Activated naive CD8-positive, alpha-beta T cell treated with anti-CD3 and anti-CD28 coated beads, Interleukin-2, amount 10 ng/mL, durations not matched to agents 7 days and 5 days (primary cell): ENCODE measurements at regions of chr12 and their contacts with region 1.

Region 1: GRCh38 chr12:118061011-118061875 is at the start of gene WSB2:
- DNase-seq: peak; percentile 73
- ATAC-seq: peak; percentile 23
- H3K4me3 Mint-ChIP-seq: peak within 1 kb of the TSS; percentile 97
- H3K27ac Mint-ChIP-seq: peak within 1 kb of the TSS; percentile 95
- H3K4me1 Mint-ChIP-seq: peaks cover 46% of the 10 kb centered on the region
- H3K27me3 Mint-ChIP-seq: no peaks in the 10 kb centered on the region
- total RNA-seq, gene WSB2: 48.2 to 50.6 TPM

Region 2: DNA sequence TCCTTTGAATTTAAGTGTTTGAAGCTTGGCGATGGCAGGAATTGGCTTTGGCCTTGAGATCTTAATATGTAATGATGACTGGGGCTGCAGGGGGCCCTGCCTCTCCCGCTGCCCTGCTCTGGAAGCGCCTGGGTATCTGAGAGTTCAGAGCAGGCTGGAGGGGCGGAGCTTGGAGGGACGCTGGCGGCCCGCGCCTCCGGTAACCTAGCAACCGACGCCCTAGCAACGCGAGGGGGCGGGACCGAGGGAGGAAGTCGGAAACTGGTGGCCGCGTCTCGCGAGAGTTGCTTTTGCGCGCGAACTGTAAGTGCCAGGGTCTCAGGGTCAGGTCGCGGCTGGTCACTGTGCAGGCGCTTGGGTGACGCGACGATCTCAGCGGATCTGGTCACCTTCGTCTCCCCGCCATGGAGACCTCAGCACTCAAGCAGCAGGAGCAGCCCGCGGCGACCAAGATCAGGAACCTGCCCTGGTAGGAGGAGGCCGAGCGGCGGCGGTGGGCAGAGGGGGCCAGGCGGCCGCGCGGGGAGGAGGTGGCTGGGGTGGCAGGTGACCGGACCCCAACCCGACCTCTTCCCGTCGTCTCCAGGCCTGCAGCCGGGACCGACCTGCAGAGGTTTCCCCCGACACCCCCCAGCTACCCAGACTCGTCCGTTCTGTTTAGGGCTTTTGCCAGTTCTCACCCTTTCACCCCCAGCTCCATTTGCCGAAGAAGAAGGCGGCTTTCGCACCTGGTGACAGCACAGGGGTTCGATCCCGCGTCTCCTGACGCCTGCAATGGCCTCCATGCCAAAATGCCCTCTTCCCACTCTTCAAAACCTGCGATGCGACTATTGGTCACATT is 44.6 kb before region 1 on chr12 and contains the start of gene RFC5:
- POLR2A ChIA-PET with region 1: interaction called, 13 read pairs
- DNase-seq: peak; percentile 99
- ATAC-seq: peak; percentile 89
- H3K4me3 Mint-ChIP-seq: peak within 1 kb of the TSS; percentile 93
- H3K27ac Mint-ChIP-seq: peak within 1 kb of the TSS; percentile 89
- H3K4me1 Mint-ChIP-seq: peaks cover 23% of the 10 kb centered on the region
- H3K27me3 Mint-ChIP-seq: peaks cover 6% of the 10 kb centered on the region
- total RNA-seq, gene RFC5: 42.7 to 44.9 TPM

Region 3: GRCh38 chr12:118073768-118074167 is 12.5 kb after region 1 on chr12:
- POLR2A ChIA-PET with region 1: interaction called, 10 read pairs
- DNase-seq: no peak
- ATAC-seq: no peak
- H3K4me3 Mint-ChIP-seq: no peak overlapping the region
- H3K27ac Mint-ChIP-seq: no peak overlapping the region
- H3K4me1 Mint-ChIP-seq: no peaks in the 10 kb centered on the region
- H3K27me3 Mint-ChIP-seq: no peaks in the 10 kb centered on the region

Region 4: DNA sequence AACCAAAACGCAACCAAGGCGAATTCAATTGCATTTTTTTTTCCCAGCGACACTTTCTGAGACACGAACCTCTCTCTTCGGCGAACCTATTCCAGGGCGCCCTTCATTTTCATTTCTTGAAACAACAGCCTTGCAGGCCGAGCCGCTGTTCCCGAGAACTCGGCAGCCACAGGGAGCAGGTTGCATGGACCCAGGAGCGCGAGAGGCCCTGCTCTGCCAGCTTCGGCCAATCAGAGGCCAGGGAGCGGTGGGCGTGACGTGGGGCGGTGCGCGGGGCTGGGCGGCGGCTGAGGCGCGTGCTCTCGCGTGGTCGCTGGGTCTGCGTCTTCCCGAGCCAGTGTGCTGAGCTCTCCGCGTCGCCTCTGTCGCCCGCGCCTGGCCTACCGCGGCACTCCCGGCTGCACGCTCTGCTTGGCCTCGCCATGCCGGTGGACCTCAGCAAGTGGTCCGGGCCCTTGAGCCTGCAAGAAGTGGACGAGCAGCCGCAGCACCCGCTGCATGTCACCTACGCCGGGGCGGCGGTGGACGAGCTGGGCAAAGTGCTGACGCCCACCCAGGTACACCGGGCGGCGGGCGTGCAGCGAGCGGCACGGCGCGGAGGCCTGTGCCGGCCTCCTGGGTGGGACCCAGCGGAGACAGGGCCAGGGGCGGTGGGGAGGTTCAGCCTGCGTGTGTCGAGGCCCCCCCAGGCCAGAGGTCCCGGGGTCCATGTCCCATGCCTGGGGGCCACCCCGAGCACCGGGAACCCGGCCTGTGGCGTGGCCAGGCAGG is 74.7 kb after region 1 on chr12 and contains the start of gene PEBP1:
- POLR2A ChIA-PET with region 1: interaction called, 12 read pairs
- DNase-seq: peak; percentile 96
- ATAC-seq: peak; percentile 100
- H3K4me3 Mint-ChIP-seq: peak within 1 kb of the TSS; percentile 94
- H3K27ac Mint-ChIP-seq: peak within 1 kb of the TSS; percentile 81
- H3K4me1 Mint-ChIP-seq: peaks cover 21% of the 10 kb centered on the region
- H3K27me3 Mint-ChIP-seq: no peaks in the 10 kb centered on the region
- total RNA-seq, gene PEBP1: 95.4 to 95.8 TPM

Region 5: GRCh38 chr12:118372541-118373495 is 311.6 kb after region 1 on chr12 and contains the start of gene TAOK3:
- POLR2A ChIA-PET with region 1: interaction called, 14 read pairs
- DNase-seq: peak; percentile 94
- ATAC-seq: peak; percentile 84
- H3K4me3 Mint-ChIP-seq: peak within 1 kb of the TSS; percentile 96
- H3K27ac Mint-ChIP-seq: peak within 1 kb of the TSS; percentile 91
- H3K4me1 Mint-ChIP-seq: peaks cover 32% of the 10 kb centered on the region
- H3K27me3 Mint-ChIP-seq: peaks cover 13% of the 10 kb centered on the region
- total RNA-seq, gene TAOK3: 60.2 to 63.4 TPM